Astrocyte of the cerebellum (primary cell): ENCODE measurements at regions of chr6 and their contacts with region 1.

Region 1: DNA sequence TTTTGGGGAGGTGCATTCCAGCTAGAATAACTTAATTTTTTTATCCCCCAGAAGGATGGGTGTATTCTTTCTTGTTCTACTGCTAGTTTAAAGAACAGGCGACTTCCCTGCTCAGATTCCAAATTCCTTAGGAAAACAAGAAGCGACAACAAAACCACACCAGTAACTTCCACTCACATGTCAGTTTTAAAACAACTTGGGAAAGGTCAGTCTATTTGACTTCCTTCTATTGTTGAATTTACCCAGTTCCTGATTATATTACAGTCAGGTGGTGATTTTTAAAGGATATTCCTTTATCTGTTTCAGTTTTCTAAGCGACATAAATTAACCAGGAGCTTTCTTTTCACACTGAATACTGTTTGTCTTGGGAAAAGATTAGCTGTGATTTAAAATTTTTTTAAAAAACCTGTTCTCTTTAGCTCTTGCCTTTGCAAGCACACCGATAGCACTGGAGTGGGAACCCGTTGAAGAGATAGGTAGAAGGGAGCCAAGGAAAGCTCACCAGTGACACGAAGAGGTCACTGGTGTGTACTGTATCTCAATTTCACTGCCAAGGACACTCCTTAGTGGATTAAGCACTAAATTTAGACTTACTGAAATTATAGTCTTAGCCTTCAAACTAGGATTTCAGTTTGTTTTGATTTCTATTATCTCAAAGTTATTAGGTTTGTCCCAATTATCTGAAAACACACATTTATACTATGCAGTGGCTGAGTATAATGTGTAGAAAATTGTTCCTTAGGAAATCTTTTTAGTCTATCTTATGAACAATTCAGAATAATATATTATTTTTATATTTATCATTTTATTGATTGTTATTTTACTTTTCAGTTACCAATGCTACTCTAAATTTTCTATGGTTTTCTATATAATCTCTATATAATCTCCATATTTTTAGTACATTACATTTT is 22.3 kb downstream of the MARCKS start:
- DNase-seq: peak; percentile 65
- H3K4me3 ChIP-seq: no peak overlapping the region
- CTCF ChIP-seq: peak; percentile 79

Region 2: DNA sequence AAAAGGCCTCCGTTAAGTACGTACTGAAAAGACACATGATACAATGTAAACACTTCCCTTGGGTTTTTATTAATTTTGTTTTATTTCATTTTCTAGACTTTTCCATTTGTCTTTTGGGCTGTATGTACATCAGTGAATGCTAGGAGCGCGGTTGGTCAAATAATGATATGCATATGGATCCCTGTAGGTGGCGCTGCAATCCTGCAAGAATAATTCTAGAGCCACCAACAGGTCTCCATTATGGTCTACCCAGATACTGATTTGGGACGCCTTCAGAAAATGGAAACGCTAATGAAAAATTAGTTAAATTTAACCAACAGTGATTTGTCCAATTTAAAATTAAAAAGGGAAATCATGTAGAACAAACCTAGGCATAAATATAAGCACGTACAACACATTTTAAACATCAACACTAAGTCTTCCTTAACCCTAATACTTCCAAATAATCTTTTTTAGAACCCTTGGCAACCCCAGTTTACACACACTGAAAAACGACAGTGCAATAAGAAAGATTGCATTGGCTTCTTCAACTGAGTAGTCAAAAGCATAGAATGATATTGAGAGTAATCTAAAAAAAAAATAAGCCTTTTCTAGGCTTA is 1098.8 kb before region 1 on chr6:
- in situ Hi-C with region 1: loop called (anchors 25 kb)
- DNase-seq: peak; percentile 80
- H3K4me3 ChIP-seq: no peak overlapping the region
- CTCF ChIP-seq: peak; percentile 69

Region 3: DNA sequence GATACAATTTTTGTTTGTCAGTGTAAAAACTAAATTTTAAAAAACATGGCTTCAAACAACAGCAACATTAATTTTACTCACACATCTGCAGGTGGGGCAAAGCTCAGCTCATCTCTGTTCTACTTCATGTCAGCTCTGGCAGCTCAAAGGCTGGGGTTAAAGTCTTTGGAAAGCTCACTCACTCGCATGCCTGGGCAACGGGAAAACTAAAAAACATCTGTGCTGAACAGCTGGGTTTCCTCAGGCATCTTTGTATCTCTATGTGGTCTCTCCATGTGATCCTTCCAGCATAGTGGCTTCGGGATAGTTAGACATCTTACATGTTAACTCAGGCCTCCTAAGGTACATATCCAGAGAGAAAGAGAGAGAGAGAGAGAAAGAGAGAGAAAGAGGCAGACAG is 1032.8 kb before region 1 on chr6:
- in situ Hi-C with region 1: no loop called
- DNase-seq: no peak
- H3K4me3 ChIP-seq: no peak overlapping the region
- CTCF ChIP-seq: no peak